Activated CD4-positive, alpha-beta T cell treated with anti-CD3 and anti-CD28 coated beads for 36 hours (primary cell): ENCODE measurements at regions of chr4 and their contacts with region 1.

Region 1: GRCh38 chr4:88823058-88823919 is 125.7 kb upstream of the NAP1L5 start:
- DNase-seq: peak; percentile 83
- ATAC-seq: peak; percentile 96
- H3K4me3 Mint-ChIP-seq: peak overlapping the region; percentile 77
- H3K27ac Mint-ChIP-seq: peak overlapping the region; percentile 88
- H3K4me1 Mint-ChIP-seq: peaks cover 38% of the 10 kb centered on the region
- H3K27me3 Mint-ChIP-seq: no peaks in the 10 kb centered on the region

Region 2: GRCh38 chr4:88456757-88457306 is 366.5 kb before region 1 on chr4 and contains the start of gene HERC5:
- CTCF ChIA-PET with region 1: no interaction called
- POLR2A ChIA-PET with region 1: no interaction called
- intact Hi-C with region 1: loop called in 1 of 2 experiments (anchors 2 kb)
- DNase-seq: peak; percentile 94
- ATAC-seq: peak; percentile 94
- H3K4me3 Mint-ChIP-seq: peak within 1 kb of the TSS; percentile 87
- H3K27ac Mint-ChIP-seq: peak within 1 kb of the TSS; percentile 100
- H3K4me1 Mint-ChIP-seq: peaks cover 7% of the 10 kb centered on the region
- H3K27me3 Mint-ChIP-seq: no peaks in the 10 kb centered on the region
- total RNA-seq, gene HERC5: 21.1 TPM

Region 3: GRCh38 chr4:88964450-88964849 is 141.2 kb after region 1 on chr4:
- CTCF ChIA-PET with region 1: no interaction called
- POLR2A ChIA-PET with region 1: no interaction called
- intact Hi-C with region 1: loop called in 1 of 2 experiments (anchors 5 kb)
- DNase-seq: peak; percentile 26
- ATAC-seq: peak; percentile 92
- H3K4me3 Mint-ChIP-seq: no peak overlapping the region
- H3K27ac Mint-ChIP-seq: no peak overlapping the region
- H3K4me1 Mint-ChIP-seq: peaks cover 11% of the 10 kb centered on the region
- H3K27me3 Mint-ChIP-seq: peaks cover 2% of the 10 kb centered on the region

Region 4: GRCh38 chr4:89110986-89111832 is 287.9 kb after region 1 on chr4 and contains the start of gene TIGD2:
- CTCF ChIA-PET with region 1: no interaction called
- POLR2A ChIA-PET with region 1: no interaction called
- intact Hi-C with region 1: loop called (anchors 1 kb)
- DNase-seq: peak; percentile 93
- ATAC-seq: peak; percentile 95
- H3K4me3 Mint-ChIP-seq: peak within 1 kb of the TSS; percentile 73
- H3K27ac Mint-ChIP-seq: peak within 1 kb of the TSS; percentile 86
- H3K4me1 Mint-ChIP-seq: peaks cover 18% of the 10 kb centered on the region
- H3K27me3 Mint-ChIP-seq: peaks cover 16% of the 10 kb centered on the region
- total RNA-seq, gene TIGD2: 2.1 to 2.3 TPM